CD4-positive, alpha-beta memory T cell (primary cell): ENCODE measurements at regions of chr1 and their contacts with region 1.

Region 1: DNA sequence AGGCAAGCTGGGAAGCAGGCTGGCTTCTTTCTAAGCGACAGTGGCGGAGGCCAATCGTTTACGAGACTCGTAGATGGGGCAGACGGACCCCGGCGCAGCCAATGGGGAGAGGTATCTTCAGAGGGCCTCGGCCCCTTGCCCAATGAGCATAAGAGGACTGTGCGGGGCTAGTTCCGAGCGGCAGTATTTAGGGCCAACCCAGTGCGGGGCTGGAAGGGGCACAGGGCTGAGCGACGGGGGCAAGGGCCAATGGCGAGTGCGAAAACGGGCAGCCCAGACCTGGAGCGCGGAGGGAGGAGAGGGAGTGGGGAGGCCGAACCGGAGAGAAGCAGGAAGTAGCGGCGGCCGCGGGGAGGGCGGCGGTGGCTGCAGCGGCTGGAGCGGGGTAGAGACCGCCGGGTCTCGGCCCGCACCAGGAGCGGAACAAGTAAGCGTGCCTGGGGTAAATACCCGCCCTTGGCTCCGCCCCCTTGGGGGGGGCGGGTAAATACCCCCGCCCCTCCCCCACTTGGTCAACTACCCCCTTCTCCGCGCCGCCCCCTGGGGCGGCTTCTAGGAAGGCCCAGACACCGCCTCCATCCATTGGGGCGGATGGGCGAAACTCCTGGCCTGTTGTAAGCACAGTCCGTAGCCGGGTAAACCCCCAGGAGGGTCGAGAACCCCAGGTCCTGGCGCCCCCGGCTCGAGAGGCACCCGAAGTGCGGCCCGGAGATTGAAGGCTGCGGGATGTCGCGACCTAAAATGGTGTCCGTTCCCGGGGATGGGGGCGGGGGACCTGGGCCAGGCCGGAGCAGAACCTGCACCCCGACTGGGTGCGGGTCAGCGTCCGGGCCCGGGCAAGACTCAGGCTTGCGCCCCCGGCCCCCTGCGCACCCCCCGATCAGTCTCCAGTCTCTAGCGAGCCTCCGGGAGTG is at the start of gene ZNF687:
- DNase-seq: peak; percentile 99
- H3K4me3 ChIP-seq: peak within 1 kb of the TSS; percentile 71 to 99
- H3K4me3 Mint-ChIP-seq: peak within 1 kb of the TSS; percentile 95 to 99 (median 98)
- H3K27ac ChIP-seq: peak within 1 kb of the TSS; percentile 94
- H3K27ac Mint-ChIP-seq: peak within 1 kb of the TSS; percentile 96 to 100 (median 99)
- H3K4me1 ChIP-seq: peaks cover 25% of the 10 kb centered on the region
- H3K4me1 Mint-ChIP-seq: peaks cover 14 to 47% (median 33%) of the 10 kb centered on the region in 4 donors
- H3K27me3 ChIP-seq: no peaks in the 10 kb centered on the region
- H3K27me3 Mint-ChIP-seq: no peaks in the 10 kb centered on the region
- total RNA-seq, gene ZNF687: 39.2 to 39.3 TPM

Region 2: DNA sequence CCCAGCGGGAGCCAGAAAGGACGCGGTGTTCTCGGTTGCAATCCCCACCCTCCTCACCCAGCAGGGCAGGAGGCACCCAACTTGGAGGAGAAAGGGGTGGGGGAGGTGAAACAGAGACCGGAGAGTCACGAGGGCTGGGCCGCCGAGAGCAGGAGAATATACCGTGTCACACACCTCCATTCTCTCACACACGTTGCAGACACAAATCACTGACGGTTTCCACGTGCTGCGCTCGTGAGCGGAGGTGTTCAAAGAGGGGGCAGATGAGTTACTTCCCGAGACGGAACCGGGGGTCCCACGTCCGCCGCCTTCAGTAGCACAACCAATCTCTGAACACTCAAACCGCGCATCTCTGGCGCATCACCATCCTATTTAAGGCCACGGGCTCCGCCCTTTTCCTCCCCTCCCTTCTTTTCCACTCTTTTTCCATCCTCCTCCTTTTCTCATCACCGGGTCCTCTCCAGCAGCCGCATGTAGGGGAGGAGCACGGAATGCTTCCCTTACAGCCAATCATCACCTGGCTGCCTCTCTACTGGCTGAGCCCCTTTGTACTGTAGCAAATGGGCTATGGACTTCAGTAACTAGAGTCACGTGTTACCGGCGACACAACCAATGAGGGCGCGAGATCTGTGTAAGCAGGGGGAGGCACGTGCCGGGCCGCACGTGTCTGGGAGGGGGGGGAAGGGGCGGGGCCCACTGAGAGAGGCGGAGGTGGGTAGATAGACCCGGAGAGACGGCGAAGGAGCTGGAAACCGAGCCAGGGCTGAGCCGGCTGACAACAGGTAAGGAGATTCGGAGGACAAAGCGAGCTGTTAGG is 1000.2 kb before region 1 on chr1 and contains the start of gene CIART:
- CTCF ChIA-PET with region 1: no interaction called
- POLR2A ChIA-PET with region 1: no interaction called
- intact Hi-C with region 1: no loop called
- DNase-seq: peak; percentile 81 to 89 (median 88)
- H3K4me3 ChIP-seq: peak within 1 kb of the TSS; percentile 61 to 80
- H3K4me3 Mint-ChIP-seq: peak within 1 kb of the TSS; percentile 83 to 97 (median 89)
- H3K27ac ChIP-seq: peak within 1 kb of the TSS; percentile 57
- H3K27ac Mint-ChIP-seq: peak within 1 kb of the TSS; percentile 87 to 98 (median 96)
- H3K4me1 ChIP-seq: peaks cover 23% of the 10 kb centered on the region
- H3K4me1 Mint-ChIP-seq: peaks cover 15 to 27% (median 24%) of the 10 kb centered on the region in 4 donors
- H3K27me3 ChIP-seq: no peaks in the 10 kb centered on the region
- H3K27me3 Mint-ChIP-seq: no peaks in the 10 kb centered on the region
- total RNA-seq, gene CIART: 0.67 to 0.94 TPM

Region 3: DNA sequence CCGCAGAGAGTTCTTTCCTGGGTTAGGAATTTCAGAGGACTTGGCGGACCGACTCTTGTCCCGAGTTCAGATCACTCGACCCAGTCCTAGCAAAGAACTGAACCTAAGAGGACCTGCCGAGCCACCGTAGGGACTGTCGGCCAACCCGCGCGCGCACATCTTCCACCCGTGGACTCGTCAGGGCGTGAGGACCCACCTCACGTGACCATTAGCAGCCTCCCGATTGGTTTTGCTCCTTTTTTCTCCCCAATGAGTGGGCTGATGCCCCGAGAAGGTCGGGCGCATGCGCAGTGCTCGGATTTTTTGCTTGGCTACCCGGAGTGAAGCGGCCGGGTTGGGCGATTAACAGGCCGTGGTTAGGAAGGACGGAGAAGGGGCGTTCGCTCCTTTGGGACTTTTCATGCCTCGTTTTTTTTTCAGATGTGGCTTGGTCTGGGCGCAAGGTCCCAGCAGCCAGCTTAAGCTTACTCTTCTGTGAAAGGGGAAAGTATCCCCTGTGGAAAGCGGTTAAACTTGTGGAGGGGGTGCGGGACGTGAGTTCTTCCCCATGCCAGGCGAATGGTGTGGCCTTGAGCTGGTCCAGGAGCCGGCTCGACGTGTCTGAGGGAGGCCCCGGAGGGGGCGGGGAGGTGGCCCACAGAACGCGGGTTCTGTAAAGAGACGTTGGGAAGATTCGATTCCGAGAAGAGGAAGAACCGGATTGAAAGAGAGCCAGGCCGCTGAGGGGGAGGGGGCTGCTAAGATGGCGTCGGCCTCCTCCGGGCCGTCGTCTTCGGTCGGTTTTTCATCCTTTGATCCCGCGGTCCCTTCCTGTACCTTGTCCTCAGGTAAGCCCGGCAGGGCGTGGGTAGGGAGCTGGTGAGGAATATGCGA is 83.7 kb before region 1 on chr1 and contains the start of gene PIP5K1A:
- CTCF ChIA-PET with region 1: no interaction called
- POLR2A ChIA-PET with region 1: interaction called, 3 read pairs
- intact Hi-C with region 1: loop called (anchors 1 kb)
- DNase-seq: peak; percentile 96 to 99 (median 98)
- H3K4me3 ChIP-seq: peak within 1 kb of the TSS; percentile 89 to 99
- H3K4me3 Mint-ChIP-seq: peak within 1 kb of the TSS; percentile 96 to 100 (median 98)
- H3K27ac ChIP-seq: peak within 1 kb of the TSS; percentile 79
- H3K27ac Mint-ChIP-seq: peak within 1 kb of the TSS; percentile 93 to 100 (median 97)
- H3K4me1 ChIP-seq: peaks cover 34% of the 10 kb centered on the region
- H3K4me1 Mint-ChIP-seq: peaks cover 29 to 53% (median 41%) of the 10 kb centered on the region in 4 donors
- H3K27me3 ChIP-seq: no peaks in the 10 kb centered on the region
- H3K27me3 Mint-ChIP-seq: peaks cover 0 to 2% of the 10 kb centered on the region in 2 donors
- total RNA-seq, gene PIP5K1A: 50.8 to 53.1 TPM

Region 4: GRCh38 chr1:151327223-151327902 is 45.1 kb after region 1 on chr1 and contains the start of gene PI4KB:
- CTCF ChIA-PET with region 1: interaction called, 4 read pairs
- POLR2A ChIA-PET with region 1: interaction called, 50 read pairs
- intact Hi-C with region 1: loop called (anchors 1 kb)
- DNase-seq: peak; percentile 95 to 97 (median 97)
- H3K4me3 ChIP-seq: peak within 1 kb of the TSS; percentile 74 to 79
- H3K4me3 Mint-ChIP-seq: peak within 1 kb of the TSS; percentile 92 to 98 (median 97)
- H3K27ac ChIP-seq: peak within 1 kb of the TSS; percentile 84
- H3K27ac Mint-ChIP-seq: peak within 1 kb of the TSS; percentile 90 to 99 (median 99)
- H3K4me1 ChIP-seq: peaks cover 35% of the 10 kb centered on the region
- H3K4me1 Mint-ChIP-seq: peaks cover 31 to 57% (median 40%) of the 10 kb centered on the region in 4 donors
- H3K27me3 ChIP-seq: no peaks in the 10 kb centered on the region
- H3K27me3 Mint-ChIP-seq: no peaks in the 10 kb centered on the region
- total RNA-seq, gene PI4KB: 87.2 to 97.4 TPM

Region 5: GRCh38 chr1:151346769-151347522 is 64.7 kb after region 1 on chr1 and contains the start of gene RFX5:
- CTCF ChIA-PET with region 1: interaction called, 56 read pairs
- POLR2A ChIA-PET with region 1: interaction called, 10 read pairs
- intact Hi-C with region 1: loop called (anchors 1 kb)
- DNase-seq: peak; percentile 93 to 98 (median 97)
- H3K4me3 ChIP-seq: peak within 1 kb of the TSS; percentile 59 to 71
- H3K4me3 Mint-ChIP-seq: peak within 1 kb of the TSS; percentile 90 to 98 (median 94)
- H3K27ac ChIP-seq: peak within 1 kb of the TSS; percentile 97
- H3K27ac Mint-ChIP-seq: peak within 1 kb of the TSS; percentile 96 to 100 (median 98)
- H3K4me1 ChIP-seq: peaks cover 28% of the 10 kb centered on the region
- H3K4me1 Mint-ChIP-seq: peaks cover 22 to 41% (median 31%) of the 10 kb centered on the region in 4 donors
- H3K27me3 ChIP-seq: no peaks in the 10 kb centered on the region
- H3K27me3 Mint-ChIP-seq: no peaks in the 10 kb centered on the region
- total RNA-seq, gene RFX5: 56.3 to 64.3 TPM

Region 6: DNA sequence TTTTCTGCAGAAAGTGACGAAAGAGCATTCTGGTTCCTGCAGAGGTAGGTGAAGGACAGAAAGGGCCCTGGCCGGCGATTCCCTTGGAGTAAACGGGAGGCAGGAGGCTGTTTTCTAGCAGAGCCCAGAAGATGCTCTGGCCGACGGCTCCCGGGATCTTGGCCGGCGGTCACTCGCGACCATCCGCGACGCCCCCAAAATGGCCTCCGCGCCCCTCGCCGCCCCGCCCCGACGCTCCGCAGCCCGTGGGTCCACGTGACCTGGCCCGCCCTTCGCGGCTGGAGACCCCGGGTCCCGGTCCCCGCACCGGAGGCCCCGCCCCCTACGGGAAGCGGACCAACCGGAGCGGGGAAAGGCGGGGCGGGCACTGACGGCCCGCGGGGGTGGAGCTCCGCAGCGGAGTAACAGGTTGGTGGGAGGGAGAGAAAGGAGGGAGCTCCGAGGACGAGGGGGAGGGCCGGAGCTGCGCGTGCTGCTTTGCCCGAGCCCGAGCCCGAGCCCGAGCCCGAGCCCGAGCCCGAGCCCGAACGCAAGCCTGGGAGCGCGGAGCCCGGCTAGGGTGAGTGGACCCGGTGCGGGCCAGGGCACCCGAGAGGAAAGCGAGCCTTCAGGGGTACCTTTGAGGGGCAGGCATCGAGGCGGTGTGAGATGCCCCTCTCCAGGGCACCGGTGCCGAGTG is 228.9 kb after region 1 on chr1 and contains the start of gene CGN:
- CTCF ChIA-PET with region 1: no interaction called
- POLR2A ChIA-PET with region 1: no interaction called
- intact Hi-C with region 1: loop called (anchors 1 kb)
- DNase-seq: peak; percentile 86 to 92 (median 86)
- H3K4me3 ChIP-seq: peak within 1 kb of the TSS; percentile 65 to 84
- H3K4me3 Mint-ChIP-seq: peak within 1 kb of the TSS; percentile 89 to 98 (median 93)
- H3K27ac ChIP-seq: peak within 1 kb of the TSS; percentile 53
- H3K27ac Mint-ChIP-seq: peak within 1 kb of the TSS; percentile 69 to 96 (median 91)
- H3K4me1 ChIP-seq: peaks cover 31% of the 10 kb centered on the region
- H3K4me1 Mint-ChIP-seq: peaks cover 13 to 39% (median 25%) of the 10 kb centered on the region in 4 donors
- H3K27me3 ChIP-seq: no peaks in the 10 kb centered on the region
- H3K27me3 Mint-ChIP-seq: no peaks in the 10 kb centered on the region
- total RNA-seq, gene CGN: 0.81 to 1.4 TPM